ENCODE measurements at regions of chr1 and their contacts with region 1.

Region 1: DNA sequence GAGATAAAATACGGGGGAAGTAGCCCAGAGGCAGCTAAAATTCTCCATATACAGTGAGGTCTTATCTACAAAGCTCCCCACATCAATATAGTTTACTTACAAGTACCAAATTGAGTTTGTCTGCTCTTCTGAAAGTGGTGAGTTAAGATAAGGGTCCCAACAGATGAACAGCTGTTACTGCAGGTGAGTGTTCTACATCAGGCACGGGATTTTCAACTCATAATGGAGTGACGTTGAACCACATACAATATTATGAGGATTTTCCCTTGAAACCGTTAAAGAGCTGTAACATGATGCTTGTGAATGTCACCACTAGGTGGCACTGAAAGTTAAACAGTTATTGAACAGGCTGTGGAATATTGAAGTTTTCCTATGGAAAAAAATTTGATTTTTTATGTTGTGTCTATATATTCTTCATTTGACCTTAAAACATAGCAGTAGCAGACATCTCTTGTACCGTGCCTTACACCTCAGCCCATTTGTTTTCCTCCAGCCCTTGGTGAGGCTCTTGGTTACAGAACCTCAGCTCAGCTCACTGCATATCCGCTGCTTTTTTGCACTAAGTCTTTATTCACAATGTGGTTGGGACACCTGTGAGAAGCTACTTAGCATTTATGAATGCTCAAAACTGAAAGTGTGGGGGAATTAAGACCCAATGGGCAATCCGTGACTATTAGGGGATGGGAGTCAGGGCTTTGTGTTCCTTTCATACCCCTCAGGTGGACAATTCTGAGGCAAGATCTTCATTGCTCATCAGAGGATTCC is 23.2 kb downstream of the CD1D start:
- DNase-seq: no peak
- H3K4me3 Mint-ChIP-seq: no peak overlapping the region
- H3K27ac Mint-ChIP-seq: no peak overlapping the region
- H3K4me1 Mint-ChIP-seq: peaks cover 12% of the 10 kb centered on the region
- H3K27me3 Mint-ChIP-seq: peaks cover 27% of the 10 kb centered on the region

Region 2: GRCh38 chr1:158329733-158330132 is 125.9 kb after region 1 on chr1:
- intact Hi-C with region 1: loop called (anchors 5 kb)
- DNase-seq: no peak
- H3K4me3 Mint-ChIP-seq: no peak overlapping the region
- H3K27ac Mint-ChIP-seq: no peak overlapping the region
- H3K4me1 Mint-ChIP-seq: peaks cover 11% of the 10 kb centered on the region
- H3K27me3 Mint-ChIP-seq: peaks cover 1% of the 10 kb centered on the region

Region 3: DNA sequence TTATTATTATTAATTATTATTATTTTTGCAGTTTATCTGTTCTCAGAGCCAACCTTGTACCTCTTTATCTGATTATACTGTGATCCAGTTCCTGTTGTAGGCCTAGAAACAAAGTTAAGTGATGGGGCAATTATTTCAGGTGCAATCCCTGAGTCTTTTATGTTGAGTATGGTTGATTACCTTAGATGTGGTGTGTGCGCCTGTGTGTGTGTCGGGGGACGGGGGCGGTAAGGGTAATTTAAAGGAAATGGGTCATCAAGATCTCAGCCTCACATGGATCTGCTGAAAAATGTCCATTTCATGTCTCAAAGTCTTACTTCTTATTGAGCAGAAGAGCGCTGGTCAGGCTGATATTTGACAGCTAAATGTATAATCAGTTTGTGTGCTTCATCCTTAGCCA is 203.2 kb after region 1 on chr1:
- intact Hi-C with region 1: loop called (anchors 5 kb)
- DNase-seq: no peak
- H3K4me3 Mint-ChIP-seq: no peak overlapping the region
- H3K27ac Mint-ChIP-seq: no peak overlapping the region
- H3K4me1 Mint-ChIP-seq: no peaks in the 10 kb centered on the region
- H3K27me3 Mint-ChIP-seq: peaks cover 6% of the 10 kb centered on the region

Region 4: DNA sequence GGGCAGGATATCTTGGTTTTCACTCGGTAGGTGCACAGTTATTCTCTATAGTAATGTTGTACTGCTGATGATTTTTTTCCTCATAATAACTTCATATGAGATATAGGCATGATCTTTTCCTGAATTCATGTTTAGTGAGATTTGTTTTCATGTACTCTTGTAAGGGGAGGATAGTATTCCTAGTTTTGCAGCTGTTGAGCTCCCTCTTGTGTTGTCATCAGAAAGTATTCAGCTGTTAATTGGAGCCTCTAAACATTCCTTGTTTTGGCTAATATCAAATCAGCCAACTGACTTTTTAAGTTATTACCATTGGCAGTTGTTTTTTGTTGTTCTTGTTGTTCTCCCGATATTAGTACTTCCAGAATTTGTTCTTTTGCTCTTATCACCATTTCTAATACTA is 292.5 kb after region 1 on chr1:
- intact Hi-C with region 1: loop called (anchors 10 kb)
- DNase-seq: no peak
- H3K4me3 Mint-ChIP-seq: no peak overlapping the region
- H3K27ac Mint-ChIP-seq: no peak overlapping the region
- H3K4me1 Mint-ChIP-seq: no peaks in the 10 kb centered on the region
- H3K27me3 Mint-ChIP-seq: peaks cover 11% of the 10 kb centered on the region

Region 5: DNA sequence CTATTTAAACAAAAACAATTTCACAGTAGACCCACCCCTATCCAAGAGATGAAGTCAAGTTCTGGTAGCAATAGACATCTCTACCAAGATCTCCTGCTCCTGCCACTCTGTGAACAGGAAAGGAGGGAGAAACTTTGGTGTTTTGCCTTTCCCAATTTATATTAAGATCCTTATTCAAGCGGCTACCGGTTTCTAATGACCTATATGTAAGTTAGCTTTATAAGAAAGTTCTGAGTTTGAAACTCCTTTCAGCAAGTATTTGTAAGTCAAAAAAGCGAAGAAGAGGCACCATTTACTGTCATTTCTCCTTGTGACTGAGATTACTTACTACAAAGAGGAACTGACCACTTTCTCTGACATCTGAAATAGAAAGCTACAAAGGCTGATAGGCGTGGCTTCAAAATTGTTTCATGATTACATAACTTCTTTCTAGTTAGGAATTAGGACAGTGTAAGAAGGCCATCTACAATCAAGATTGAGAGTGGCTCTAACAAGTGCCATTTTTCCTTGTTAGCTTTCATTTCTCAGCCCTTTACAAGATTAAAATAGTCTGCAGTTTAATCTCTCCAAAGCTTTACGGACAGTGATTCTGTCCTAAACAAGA is 627.1 kb after region 1 on chr1 and contains the start of gene MNDA:
- intact Hi-C with region 1: loop called (anchors 5 kb)
- DNase-seq: no peak
- H3K4me3 Mint-ChIP-seq: no peak within 1 kb of the TSS
- H3K27ac Mint-ChIP-seq: peak within 1 kb of the TSS; percentile 64
- H3K4me1 Mint-ChIP-seq: peaks cover 20% of the 10 kb centered on the region
- H3K27me3 Mint-ChIP-seq: no peaks in the 10 kb centered on the region
- total RNA-seq, gene MNDA: not detected in 2 replicates

Region 6: GRCh38 chr1:158998781-158999161 is 794.9 kb after region 1 on chr1:
- intact Hi-C with region 1: loop called (anchors 5 kb)
- DNase-seq: peak; percentile 33
- H3K4me3 Mint-ChIP-seq: peak overlapping the region; percentile 43
- H3K27ac Mint-ChIP-seq: no peak overlapping the region
- H3K4me1 Mint-ChIP-seq: peaks cover 31% of the 10 kb centered on the region
- H3K27me3 Mint-ChIP-seq: no peaks in the 10 kb centered on the region

Region 7: GRCh38 chr1:159071970-159072582 is 868.2 kb after region 1 on chr1:
- intact Hi-C with region 1: loop called (anchors 5 kb)
- DNase-seq: no peak
- H3K4me3 Mint-ChIP-seq: peak overlapping the region; percentile 71
- H3K27ac Mint-ChIP-seq: peak overlapping the region; percentile 78
- H3K4me1 Mint-ChIP-seq: peaks cover 54% of the 10 kb centered on the region
- H3K27me3 Mint-ChIP-seq: no peaks in the 10 kb centered on the region